Heart left ventricle (tissue), 16 donors: ENCODE measurements at regions of chr1 and their contacts with region 1.

Region 1: GRCh38 chr1:111911776-111912525 is 77.5 kb downstream of the KCND3 start:
- DNase-seq: no peak
- ATAC-seq: no peak
- H3K4me3 ChIP-seq: no peak overlapping the region
- H3K27ac ChIP-seq: no peak overlapping the region
- H3K4me1 ChIP-seq: peaks cover 0 to 38% (median 2%) of the 10 kb centered on the region in 12 donors
- H3K27me3 ChIP-seq: no peaks in the 10 kb centered on the region
- CTCF ChIP-seq: no peak
- POLR2A ChIP-seq: no peak

Region 2: DNA sequence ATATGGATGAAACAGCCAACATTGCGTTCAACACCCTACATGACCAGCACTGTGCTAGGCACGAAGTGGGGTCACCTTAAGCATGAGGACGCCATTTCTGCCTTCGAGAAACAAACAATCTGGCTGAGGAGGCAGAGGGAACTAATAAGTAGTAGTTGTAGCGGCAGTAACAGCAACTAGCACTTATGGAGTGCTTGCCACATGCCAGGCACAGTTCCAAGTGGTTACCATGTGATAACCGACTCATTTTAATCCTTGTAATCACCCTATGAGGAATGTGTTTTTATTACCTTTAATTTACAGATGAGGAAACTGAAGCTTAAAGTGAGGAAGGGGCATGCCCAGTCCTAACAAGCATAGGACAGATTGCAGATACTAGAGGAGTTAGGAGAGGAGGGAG is 43.8 kb after region 1 on chr1:
- intact Hi-C with region 1: loop called in 1 of 10 experiments (anchors 5 kb)
- DNase-seq: no peak
- ATAC-seq: peak in 1 of 4 donors; percentile 49
- H3K4me3 ChIP-seq: no peak overlapping the region
- H3K27ac ChIP-seq: no peak overlapping the region
- H3K4me1 ChIP-seq: peaks cover 0 to 66% (median 20%) of the 10 kb centered on the region in 12 donors
- H3K27me3 ChIP-seq: no peaks in the 10 kb centered on the region
- CTCF ChIP-seq: no peak
- POLR2A ChIP-seq: no peak

Region 3: GRCh38 chr1:112058815-112059450 is 147.0 kb after region 1 on chr1:
- intact Hi-C with region 1: no loop called
- DNase-seq: no peak
- ATAC-seq: no peak
- H3K4me3 ChIP-seq: no peak overlapping the region
- H3K27ac ChIP-seq: no peak overlapping the region
- H3K4me1 ChIP-seq: peaks cover 0 to 47% (median 15%) of the 10 kb centered on the region in 12 donors
- H3K27me3 ChIP-seq: no peaks in the 10 kb centered on the region
- CTCF ChIP-seq: no peak
- POLR2A ChIP-seq: no peak